ENCODE measurements at regions of chr10 and their contacts with region 1.

Region 1: DNA sequence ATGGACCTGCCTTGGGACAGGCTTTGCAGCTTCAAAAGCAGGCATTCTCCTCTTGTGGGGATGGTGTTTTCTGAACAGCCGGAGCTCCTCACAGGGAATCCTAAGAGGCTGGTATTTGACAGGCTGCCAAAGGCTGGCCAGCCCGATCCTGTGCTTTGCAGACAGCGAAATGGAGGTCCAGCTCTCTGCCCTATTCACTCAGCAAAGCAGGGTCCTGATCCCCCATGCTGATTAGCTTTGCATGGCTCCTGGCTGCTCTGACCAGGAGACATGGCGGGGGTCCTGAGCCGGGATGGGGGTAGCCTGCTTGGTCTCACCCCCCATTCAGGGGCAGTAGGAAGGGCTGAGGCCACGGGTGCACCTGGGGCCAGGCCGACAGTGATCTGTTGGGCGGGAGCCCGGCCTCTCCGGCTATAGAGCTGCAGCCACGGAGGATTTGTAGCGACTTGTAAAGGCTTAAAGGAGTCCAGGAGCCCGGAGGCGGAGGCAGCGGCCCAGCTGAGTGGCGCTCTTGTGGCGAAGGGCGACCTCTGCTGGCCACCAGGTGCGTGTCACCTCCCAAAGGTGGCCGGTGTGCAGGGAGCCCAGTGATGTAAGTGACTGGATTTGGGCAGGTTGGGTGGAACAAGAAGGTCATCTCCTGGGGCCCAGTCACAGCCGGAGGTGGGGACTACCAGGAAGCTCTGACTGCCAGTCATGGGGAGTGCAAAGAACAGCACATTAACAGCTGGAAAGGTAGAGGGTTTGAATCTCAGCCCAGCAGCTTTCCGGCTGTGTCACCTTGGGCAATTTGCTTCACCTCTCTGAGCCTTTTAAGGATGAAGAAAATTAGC is 126.5 kb downstream of the ZMIZ1 start:
- DNase-seq: no peak
- H3K4me3 ChIP-seq: no peak overlapping the region
- CTCF ChIP-seq: peak; percentile 96

Region 2: GRCh38 chr10:77909749-77910375 is 1285.4 kb before region 1 on chr10:
- CTCF ChIA-PET with region 1: no interaction called
- POLR2A ChIA-PET with region 1: no interaction called
- DNase-seq: no peak
- H3K4me3 ChIP-seq: no peak overlapping the region
- CTCF ChIP-seq: no peak

Region 3: DNA sequence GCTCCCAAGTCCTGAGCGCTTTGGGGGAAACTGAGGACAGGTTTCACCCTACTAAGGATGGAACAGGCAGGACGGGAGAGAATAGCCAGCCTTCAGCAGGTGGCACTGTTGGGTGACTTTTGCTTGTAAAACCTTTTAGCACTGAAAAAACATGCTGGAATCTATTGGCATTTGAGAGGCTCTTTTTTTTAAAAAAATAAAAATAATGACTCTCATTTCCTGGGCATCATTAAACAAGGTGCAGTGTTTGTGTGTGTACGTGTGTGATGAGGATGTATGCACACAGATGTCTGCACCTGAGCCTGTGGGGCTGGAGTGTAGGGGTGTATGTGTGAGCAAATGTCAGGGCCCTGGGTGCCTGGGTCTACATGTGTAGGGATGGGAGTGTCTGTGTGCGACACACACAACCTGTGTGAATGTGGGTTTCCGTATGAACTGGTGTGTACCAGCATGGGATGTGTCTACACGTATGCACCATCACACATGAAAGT is 983.7 kb before region 1 on chr10:
- CTCF ChIA-PET with region 1: interaction called, 41 read pairs
- POLR2A ChIA-PET with region 1: no interaction called
- DNase-seq: no peak
- H3K4me3 ChIP-seq: no peak overlapping the region
- CTCF ChIP-seq: peak; percentile 76

Region 4: DNA sequence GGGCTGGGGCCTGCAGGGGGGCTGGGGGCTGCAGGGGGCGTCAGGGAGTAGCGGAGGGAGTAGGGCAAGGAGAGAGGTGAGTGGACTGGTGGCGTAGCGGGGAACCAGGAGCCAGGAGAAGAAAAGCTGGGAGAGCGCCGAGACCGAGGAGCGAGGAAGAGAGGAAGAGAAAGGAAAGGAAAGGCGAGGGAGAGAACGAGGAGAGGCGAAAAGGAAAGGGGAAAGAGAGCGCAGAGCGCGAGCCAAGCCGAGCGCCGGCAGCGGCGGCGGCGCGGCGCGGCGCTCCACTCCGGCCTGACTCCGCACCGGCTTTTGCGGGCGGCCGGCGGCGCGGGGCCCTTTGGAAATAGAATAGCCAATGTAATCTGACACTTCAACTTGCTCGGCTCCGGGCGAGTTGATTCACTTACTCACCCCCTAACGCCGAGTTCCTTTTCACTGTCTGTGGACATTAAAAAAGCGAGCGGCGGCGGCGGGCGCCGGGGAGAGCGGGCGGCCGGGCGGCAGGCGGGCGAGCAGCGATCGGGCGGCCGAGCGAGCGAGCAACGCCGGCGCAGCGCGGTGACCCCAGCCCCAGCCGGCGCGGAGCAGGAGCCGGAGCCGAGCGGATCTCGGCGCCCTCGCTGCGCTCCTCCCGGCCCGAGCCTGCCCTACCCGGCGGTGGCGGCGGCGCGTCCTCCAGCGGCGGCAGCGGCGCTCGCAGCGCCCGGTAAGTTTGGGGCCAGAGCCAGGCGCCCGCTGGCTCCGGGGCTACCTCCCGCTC is 126.6 kb before region 1 on chr10 and contains the start of gene ZMIZ1:
- CTCF ChIA-PET with region 1: interaction called, 180 read pairs
- POLR2A ChIA-PET with region 1: interaction called, 8 read pairs
- DNase-seq: peak; percentile 65
- H3K4me3 ChIP-seq: peak within 1 kb of the TSS; percentile 95
- CTCF ChIP-seq: peak; percentile 12

Region 5: DNA sequence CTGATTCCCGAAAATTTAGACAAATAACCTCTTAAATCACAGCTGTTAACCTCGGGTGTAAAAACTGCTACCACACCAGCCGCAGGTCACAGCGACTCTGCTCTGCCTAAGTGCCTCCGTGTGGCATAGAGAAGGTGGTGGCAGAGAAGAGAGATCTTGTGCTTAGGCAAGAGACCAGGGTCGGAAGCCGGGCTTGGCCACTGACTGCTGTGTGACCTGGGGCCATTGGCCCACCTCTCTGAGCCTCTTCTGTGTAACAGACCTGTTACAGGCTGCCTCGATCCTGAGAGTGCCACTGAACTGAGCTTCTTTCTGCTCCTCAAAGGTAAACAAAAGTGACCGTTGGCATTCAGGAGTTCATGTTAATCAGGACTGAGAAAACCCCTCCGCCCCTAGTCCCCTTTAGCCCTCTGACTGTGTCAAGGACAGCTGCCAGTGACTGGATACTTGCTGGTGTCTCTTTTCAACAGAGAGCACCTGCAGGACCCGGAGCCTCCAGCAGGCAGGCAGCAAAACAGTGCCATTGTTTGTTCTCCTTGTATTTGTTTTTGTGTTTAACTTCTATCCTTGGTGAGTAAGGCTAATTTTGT is 90.1 kb before region 1 on chr10:
- CTCF ChIA-PET with region 1: interaction called, 15 read pairs
- POLR2A ChIA-PET with region 1: no interaction called
- DNase-seq: no peak
- H3K4me3 ChIP-seq: no peak overlapping the region
- CTCF ChIP-seq: no peak

Region 6: GRCh38 chr10:79127151-79127961 is 68.0 kb before region 1 on chr10:
- CTCF ChIA-PET with region 1: interaction called, 23 read pairs
- POLR2A ChIA-PET with region 1: no interaction called
- DNase-seq: no peak
- H3K4me3 ChIP-seq: no peak overlapping the region
- CTCF ChIP-seq: no peak

Region 7: DNA sequence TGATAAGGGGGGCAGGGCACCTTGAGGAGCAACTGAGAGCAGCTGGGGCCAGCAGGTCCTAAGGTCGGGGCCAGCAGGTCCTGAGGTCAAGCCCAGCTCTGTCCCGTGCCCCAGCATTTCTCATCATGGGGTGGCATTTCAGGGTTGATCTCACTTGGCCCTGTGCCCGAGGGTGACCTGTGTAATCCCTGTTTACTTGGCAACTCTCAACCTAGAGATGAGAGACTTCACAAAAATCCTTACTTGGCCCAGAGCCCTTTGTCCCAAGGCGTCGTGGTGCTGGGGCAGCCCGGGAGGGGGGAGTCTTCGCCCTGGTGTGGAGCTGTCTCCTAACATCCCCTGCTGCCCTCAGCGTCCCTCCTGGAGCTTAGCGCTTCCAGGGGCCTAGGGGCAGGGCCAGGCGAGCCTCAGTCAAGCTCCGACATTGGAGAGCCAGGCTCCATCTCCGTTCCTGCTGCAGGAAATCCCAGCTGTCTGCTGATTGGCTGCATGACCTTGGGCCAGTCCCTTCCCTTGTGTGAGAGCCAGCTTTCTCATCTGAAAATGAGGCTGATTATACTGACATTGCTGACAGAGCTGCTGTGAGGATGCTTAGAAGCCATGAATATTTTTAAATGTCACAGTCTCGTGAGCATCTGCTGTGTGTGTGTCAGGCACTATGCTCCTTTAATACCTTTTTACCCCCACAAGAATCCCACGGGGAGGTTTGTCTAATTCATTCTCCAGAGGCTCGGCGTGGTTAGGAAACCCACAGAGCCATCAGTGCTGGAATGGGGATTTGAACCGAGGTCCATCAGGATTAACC is 32.2 kb before region 1 on chr10:
- CTCF ChIA-PET with region 1: interaction called, 16 read pairs
- POLR2A ChIA-PET with region 1: interaction called, 3 read pairs
- DNase-seq: no peak
- H3K4me3 ChIP-seq: no peak overlapping the region
- CTCF ChIP-seq: no peak

Region 8: GRCh38 chr10:79224263-79224949 is 29.1 kb after region 1 on chr10:
- CTCF ChIA-PET with region 1: interaction called, 14 read pairs
- POLR2A ChIA-PET with region 1: no interaction called
- DNase-seq: no peak
- H3K4me3 ChIP-seq: no peak overlapping the region
- CTCF ChIP-seq: no peak

Region 9: GRCh38 chr10:79542626-79543025 is 347.3 kb after region 1 on chr10:
- CTCF ChIA-PET with region 1: no interaction called
- POLR2A ChIA-PET with region 1: no interaction called
- DNase-seq: no peak
- H3K4me3 ChIP-seq: no peak overlapping the region
- CTCF ChIP-seq: no peak

Measured in AG04449 (cell line).